SK-N-SH (cell line): ENCODE measurements at regions of chr12 and their contacts with region 1.

Region 1: GRCh38 chr12:7108796-7109571 is at the start of gene C1RL:
- DNase-seq: peak; percentile 77
- H3K4me3 ChIP-seq: peak within 1 kb of the TSS; percentile 55 to 56
- H3K27ac ChIP-seq: peak within 1 kb of the TSS; percentile 61 to 83
- H3K4me1 ChIP-seq: peaks cover 0 to 23% of the 10 kb centered on the region in 2 experiments; a peak in 2 of 4 replicates
- H3K27me3 ChIP-seq: no peaks in the 10 kb centered on the region
- CTCF ChIP-seq: peak; percentile 83
- EP300 ChIP-seq: no peak; a peak in 1 of 4 replicates
- RAD21 ChIP-seq: peak; percentile 66
- polyA plus RNA-seq, gene C1RL: 8.3 and 9.5 TPM in 2 replicates

Region 2: GRCh38 chr12:7092229-7092985 is 16.6 kb before region 1 on chr12 and contains the start of gene C1R:
- CTCF ChIA-PET with region 1: interaction called, 19 read pairs
- POLR2A ChIA-PET with region 1: no interaction called
- DNase-seq: peak; percentile 77
- H3K4me3 ChIP-seq: peak within 1 kb of the TSS; percentile 25 to 54; a peak in 3 of 4 replicates
- H3K27ac ChIP-seq: no peak within 1 kb of the TSS
- H3K4me1 ChIP-seq: peaks cover 0 to 8% of the 10 kb centered on the region in 2 experiments; a peak in 1 of 4 replicates
- H3K27me3 ChIP-seq: no peaks in the 10 kb centered on the region
- CTCF ChIP-seq: peak; percentile 81
- EP300 ChIP-seq: no peak
- RAD21 ChIP-seq: peak; percentile 72
- polyA plus RNA-seq, gene C1R: 18.7 and 20.1 TPM in 2 replicates

Region 3: GRCh38 chr12:7122811-7123769 is 14.1 kb after region 1 on chr12:
- CTCF ChIA-PET with region 1: interaction called, 39 read pairs
- POLR2A ChIA-PET with region 1: interaction called, 3 read pairs
- DNase-seq: no peak
- H3K4me3 ChIP-seq: no peak overlapping the region
- H3K27ac ChIP-seq: no peak overlapping the region
- H3K4me1 ChIP-seq: no peaks in the 10 kb centered on the region
- H3K27me3 ChIP-seq: 0 out of 2 replicates have a peak, but pooled peaks cover 2% of the 10 kb centered on the region
- CTCF ChIP-seq: no peak
- EP300 ChIP-seq: no peak
- RAD21 ChIP-seq: no peak

Region 4: GRCh38 chr12:7129872-7130680 is 21.1 kb after region 1 on chr12 and contains the start of gene CLSTN3:
- CTCF ChIA-PET with region 1: interaction called, 39 read pairs
- POLR2A ChIA-PET with region 1: no interaction called
- DNase-seq: peak; percentile 100
- H3K4me3 ChIP-seq: peak within 1 kb of the TSS; percentile 71 to 76
- H3K27ac ChIP-seq: peak within 1 kb of the TSS in 1 of 2 experiments; percentile 67; a peak in 1 of 4 replicates
- H3K4me1 ChIP-seq: peaks cover 0 to 13% of the 10 kb centered on the region in 2 experiments; a peak in 1 of 4 replicates
- H3K27me3 ChIP-seq: 0 out of 2 replicates have a peak, but pooled peaks cover 7% of the 10 kb centered on the region
- CTCF ChIP-seq: no peak
- EP300 ChIP-seq: no peak
- RAD21 ChIP-seq: no peak
- polyA plus RNA-seq, gene CLSTN3: 12.7 and 12.9 TPM in 2 replicates

Region 5: GRCh38 chr12:7197841-7198240 is 88.9 kb after region 1 on chr12:
- CTCF ChIA-PET with region 1: no interaction called
- POLR2A ChIA-PET with region 1: no interaction called
- DNase-seq: no peak
- H3K4me3 ChIP-seq: no peak overlapping the region
- H3K27ac ChIP-seq: no peak overlapping the region
- H3K4me1 ChIP-seq: no peaks in the 10 kb centered on the region; a peak in 1 of 4 replicates
- H3K27me3 ChIP-seq: no peaks in the 10 kb centered on the region
- CTCF ChIP-seq: no peak
- EP300 ChIP-seq: no peak
- RAD21 ChIP-seq: no peak